ENCODE measurements at regions of chr11 and their contacts with region 1.

Region 1: DNA sequence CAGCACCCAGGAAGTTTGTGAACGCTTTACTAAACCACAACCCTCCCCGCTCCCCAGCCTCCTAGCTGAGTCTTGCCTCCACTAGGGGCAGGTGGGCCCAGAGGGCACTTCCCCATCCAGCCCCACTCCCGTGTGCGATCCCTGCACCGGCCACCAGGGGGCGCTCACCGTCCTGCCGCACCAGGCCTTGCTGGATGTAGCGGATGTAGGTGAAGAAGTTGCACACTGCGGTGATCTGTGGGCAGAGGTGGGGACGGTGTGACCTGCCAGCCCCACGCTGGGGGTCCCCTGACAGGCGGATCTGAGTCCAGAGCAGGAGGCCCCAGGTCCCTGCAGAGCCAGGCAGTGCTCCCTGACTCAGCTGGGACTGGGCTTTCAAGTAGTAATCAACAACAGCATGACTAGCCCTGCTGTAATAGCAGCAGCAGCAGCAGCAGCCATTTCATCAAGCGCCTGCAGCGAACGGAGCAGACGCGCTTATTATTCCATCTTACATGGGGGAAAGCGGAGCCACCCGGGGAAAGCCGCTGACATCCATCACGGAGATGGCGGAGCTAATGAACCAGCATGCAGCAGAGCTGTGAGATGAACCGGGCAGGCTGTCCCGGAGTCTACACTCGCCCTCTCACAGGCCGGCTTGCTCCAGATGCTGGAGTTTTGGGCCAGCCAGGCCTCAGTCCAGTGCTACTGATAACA is 7.9 kb upstream of the FADS3 start:
- DNase-seq: peak; percentile 94
- ATAC-seq: peak; percentile 92
- H3K4me3 Mint-ChIP-seq: no peak overlapping the region
- H3K27ac Mint-ChIP-seq: peak overlapping the region; percentile 45
- H3K4me1 Mint-ChIP-seq: peaks cover 7% of the 10 kb centered on the region
- H3K27me3 Mint-ChIP-seq: peaks cover 4% of the 10 kb centered on the region

Region 2: DNA sequence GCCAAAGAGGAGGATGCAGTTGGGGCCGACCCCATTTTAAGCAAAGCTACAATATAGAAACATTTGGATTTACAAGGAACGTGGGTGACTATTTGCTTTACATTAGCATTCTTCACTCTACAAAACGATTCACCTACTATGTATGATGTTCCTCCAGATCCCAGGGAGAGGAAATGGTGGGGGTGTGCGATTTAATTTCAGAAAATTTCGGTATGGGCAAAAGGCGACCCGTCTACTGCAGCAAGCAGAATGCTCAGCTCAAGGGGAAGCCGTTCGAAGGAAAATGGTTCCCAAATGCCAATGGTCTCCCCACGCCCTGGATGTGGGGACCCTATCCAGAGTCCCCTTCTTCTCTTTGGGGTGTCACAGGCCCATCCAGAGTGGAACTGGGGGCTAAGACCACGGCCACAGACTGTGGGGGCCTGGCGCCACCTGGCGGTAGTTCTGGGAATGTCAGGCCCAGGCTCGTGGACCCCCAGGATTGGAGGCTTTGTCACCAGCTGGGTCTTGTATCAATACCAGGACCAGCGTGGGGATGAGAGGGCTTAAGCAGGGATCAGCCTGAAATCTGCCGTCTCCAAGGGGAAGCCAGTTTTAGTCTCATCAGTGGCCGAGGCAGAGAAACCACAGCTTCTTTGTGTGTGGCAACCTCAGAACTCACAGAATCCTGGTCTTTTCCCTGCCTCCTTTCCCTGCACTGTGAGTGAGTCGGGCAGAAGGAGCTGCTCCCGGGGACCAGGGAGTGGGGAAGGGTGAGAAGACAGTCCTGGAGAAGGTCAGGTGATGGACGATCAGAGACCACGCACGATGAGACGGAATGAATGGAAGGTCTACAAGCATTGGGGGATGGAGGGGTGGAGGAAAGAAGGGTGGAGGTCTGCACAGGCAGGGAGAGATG is 382.4 kb before region 1 on chr11:
- CTCF ChIA-PET with region 1: no interaction called
- POLR2A ChIA-PET with region 1: no interaction called
- DNase-seq: peak; percentile 65
- ATAC-seq: peak; percentile 66
- H3K4me3 Mint-ChIP-seq: no peak overlapping the region
- H3K27ac Mint-ChIP-seq: no peak overlapping the region
- H3K4me1 Mint-ChIP-seq: peaks cover 4% of the 10 kb centered on the region
- H3K27me3 Mint-ChIP-seq: no peaks in the 10 kb centered on the region

Region 3: GRCh38 chr11:61718621-61719302 is 180.5 kb before region 1 on chr11:
- CTCF ChIA-PET with region 1: no interaction called
- POLR2A ChIA-PET with region 1: no interaction called
- DNase-seq: no peak
- ATAC-seq: no peak
- H3K4me3 Mint-ChIP-seq: no peak overlapping the region
- H3K27ac Mint-ChIP-seq: no peak overlapping the region
- H3K4me1 Mint-ChIP-seq: no peaks in the 10 kb centered on the region
- H3K27me3 Mint-ChIP-seq: peaks cover 5% of the 10 kb centered on the region

Region 4: DNA sequence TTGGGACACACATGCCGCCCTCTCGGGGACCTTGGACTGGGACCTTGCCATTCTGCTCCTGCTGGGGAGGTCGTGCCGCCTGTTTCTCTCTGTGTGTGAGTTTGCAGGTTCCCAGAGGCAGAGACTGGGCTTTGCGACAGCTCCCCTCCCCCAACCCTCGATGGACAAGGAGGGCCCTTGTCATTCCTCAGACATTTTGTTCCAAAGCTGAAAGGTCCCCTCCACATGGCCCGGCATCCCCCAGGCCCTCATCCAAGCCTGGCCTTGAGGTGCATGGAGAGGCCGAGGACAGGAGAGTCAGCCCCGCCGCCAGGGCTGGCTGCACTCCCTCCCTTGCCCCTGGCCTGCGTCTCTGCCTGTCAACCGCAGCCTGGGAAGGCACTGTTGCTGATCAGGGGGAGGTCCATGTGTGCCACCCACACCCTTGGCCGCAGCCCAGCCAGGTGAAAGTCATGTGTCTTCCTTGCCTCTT is 45.6 kb before region 1 on chr11:
- CTCF ChIA-PET with region 1: no interaction called
- POLR2A ChIA-PET with region 1: no interaction called
- DNase-seq: no peak
- ATAC-seq: no peak
- H3K4me3 Mint-ChIP-seq: no peak overlapping the region
- H3K27ac Mint-ChIP-seq: peak overlapping the region; percentile 40
- H3K4me1 Mint-ChIP-seq: no peaks in the 10 kb centered on the region
- H3K27me3 Mint-ChIP-seq: no peaks in the 10 kb centered on the region

Region 5: DNA sequence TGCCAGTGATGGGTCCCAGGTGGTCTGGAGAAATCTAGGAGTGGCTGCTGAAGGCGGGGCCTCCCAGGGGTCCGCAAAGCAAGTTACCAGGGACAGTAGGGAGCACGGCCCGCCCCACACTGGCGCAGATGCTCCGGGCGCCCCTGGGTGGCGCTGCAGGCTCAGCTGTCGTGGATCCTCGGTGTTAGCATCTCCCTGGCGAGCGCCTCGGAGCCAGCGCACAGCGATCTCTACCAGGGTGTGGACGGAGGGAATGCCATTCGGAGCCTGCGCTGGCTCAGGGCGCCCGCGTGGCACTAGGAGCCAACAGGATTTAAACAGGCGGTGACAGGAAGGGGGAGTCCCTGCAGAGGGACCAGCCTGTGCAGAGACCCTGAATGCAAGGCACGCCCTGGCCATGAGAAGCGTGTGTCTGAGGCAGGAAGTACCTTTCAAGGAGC is 28.1 kb before region 1 on chr11:
- CTCF ChIA-PET with region 1: interaction called, 13 read pairs
- POLR2A ChIA-PET with region 1: no interaction called
- DNase-seq: peak; percentile 77
- ATAC-seq: peak; percentile 94
- H3K4me3 Mint-ChIP-seq: peak overlapping the region; percentile 54
- H3K27ac Mint-ChIP-seq: peak overlapping the region; percentile 61
- H3K4me1 Mint-ChIP-seq: peaks cover 8% of the 10 kb centered on the region
- H3K27me3 Mint-ChIP-seq: no peaks in the 10 kb centered on the region

Region 6: GRCh38 chr11:61928606-61929005 is 29.3 kb after region 1 on chr11:
- CTCF ChIA-PET with region 1: interaction called, 15 read pairs
- POLR2A ChIA-PET with region 1: no interaction called
- DNase-seq: no peak
- ATAC-seq: no peak
- H3K4me3 Mint-ChIP-seq: no peak overlapping the region
- H3K27ac Mint-ChIP-seq: no peak overlapping the region
- H3K4me1 Mint-ChIP-seq: peaks cover 2% of the 10 kb centered on the region
- H3K27me3 Mint-ChIP-seq: peaks cover 11% of the 10 kb centered on the region

Region 7: DNA sequence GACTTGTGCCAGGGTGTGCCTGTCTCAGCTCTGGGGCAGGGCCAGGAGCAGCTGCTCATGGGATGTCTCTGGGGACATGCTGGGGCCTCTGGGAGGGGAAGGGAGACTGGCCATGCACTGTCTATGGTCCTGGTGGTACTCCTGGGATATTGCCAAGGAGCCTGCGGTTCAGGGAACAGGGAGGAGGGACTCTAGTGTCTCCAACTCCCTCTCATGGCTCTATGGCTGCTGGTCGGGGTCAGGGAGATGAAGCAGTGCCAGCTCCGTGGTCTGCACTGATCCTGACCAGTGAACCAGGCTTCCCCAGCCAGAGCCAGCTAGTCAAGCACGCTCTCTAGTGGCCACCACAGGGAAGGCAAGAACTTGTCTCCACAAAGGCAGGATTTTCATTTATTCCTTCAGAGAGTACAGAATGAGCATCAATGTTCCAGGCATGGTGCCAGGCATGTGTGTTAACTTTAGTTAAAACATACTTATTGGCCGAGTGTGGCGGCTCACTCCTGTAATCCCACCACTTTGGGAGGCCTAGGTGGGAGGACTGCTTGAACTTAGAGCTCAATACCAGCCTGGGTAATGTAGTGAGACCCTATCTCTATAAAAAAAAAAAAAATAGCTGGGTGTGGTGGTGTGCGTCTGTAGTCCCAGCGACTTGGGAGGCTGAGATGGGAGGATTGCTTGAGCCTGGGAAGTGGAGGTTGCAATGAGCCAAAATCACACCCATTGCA is 48.4 kb after region 1 on chr11:
- CTCF ChIA-PET with region 1: interaction called, 139 read pairs
- POLR2A ChIA-PET with region 1: no interaction called
- DNase-seq: peak; percentile 77
- ATAC-seq: peak; percentile 83
- H3K4me3 Mint-ChIP-seq: no peak overlapping the region
- H3K27ac Mint-ChIP-seq: no peak overlapping the region
- H3K4me1 Mint-ChIP-seq: no peaks in the 10 kb centered on the region
- H3K27me3 Mint-ChIP-seq: peaks cover 8% of the 10 kb centered on the region

Region 8: GRCh38 chr11:62108017-62108750 is 208.9 kb after region 1 on chr11:
- CTCF ChIA-PET with region 1: interaction called, 193 read pairs
- POLR2A ChIA-PET with region 1: interaction called, 3 read pairs
- DNase-seq: peak; percentile 63
- ATAC-seq: peak; percentile 21
- H3K4me3 Mint-ChIP-seq: no peak overlapping the region
- H3K27ac Mint-ChIP-seq: no peak overlapping the region
- H3K4me1 Mint-ChIP-seq: peaks cover 22% of the 10 kb centered on the region
- H3K27me3 Mint-ChIP-seq: peaks cover 12% of the 10 kb centered on the region

Region 9: DNA sequence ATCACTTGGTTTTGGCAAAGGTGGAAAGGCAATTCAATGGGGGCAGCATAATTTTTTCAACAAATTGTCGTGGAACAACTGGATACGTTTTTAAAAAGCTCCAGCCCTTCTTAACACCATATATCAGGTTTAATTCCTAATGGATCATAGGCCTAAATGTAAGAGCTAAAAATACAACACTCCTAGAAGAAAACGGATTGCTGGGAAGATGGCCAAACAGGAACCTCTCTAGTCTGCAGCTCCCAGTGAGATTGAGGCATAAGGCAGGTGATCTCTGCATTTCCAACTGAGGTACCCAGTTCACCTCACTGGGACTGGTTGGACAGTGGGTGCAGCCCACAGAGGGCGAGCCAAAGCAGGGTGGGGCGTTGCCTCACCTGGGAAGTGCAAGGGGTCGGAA is 258.3 kb after region 1 on chr11:
- CTCF ChIA-PET with region 1: no interaction called
- POLR2A ChIA-PET with region 1: no interaction called
- DNase-seq: no peak
- ATAC-seq: no peak
- H3K4me3 Mint-ChIP-seq: no peak overlapping the region
- H3K27ac Mint-ChIP-seq: no peak overlapping the region
- H3K4me1 Mint-ChIP-seq: no peaks in the 10 kb centered on the region
- H3K27me3 Mint-ChIP-seq: peaks cover 38% of the 10 kb centered on the region